Natural killer cell (primary cell): ENCODE measurements at regions of chr19 and their contacts with region 1.

Region 1: DNA sequence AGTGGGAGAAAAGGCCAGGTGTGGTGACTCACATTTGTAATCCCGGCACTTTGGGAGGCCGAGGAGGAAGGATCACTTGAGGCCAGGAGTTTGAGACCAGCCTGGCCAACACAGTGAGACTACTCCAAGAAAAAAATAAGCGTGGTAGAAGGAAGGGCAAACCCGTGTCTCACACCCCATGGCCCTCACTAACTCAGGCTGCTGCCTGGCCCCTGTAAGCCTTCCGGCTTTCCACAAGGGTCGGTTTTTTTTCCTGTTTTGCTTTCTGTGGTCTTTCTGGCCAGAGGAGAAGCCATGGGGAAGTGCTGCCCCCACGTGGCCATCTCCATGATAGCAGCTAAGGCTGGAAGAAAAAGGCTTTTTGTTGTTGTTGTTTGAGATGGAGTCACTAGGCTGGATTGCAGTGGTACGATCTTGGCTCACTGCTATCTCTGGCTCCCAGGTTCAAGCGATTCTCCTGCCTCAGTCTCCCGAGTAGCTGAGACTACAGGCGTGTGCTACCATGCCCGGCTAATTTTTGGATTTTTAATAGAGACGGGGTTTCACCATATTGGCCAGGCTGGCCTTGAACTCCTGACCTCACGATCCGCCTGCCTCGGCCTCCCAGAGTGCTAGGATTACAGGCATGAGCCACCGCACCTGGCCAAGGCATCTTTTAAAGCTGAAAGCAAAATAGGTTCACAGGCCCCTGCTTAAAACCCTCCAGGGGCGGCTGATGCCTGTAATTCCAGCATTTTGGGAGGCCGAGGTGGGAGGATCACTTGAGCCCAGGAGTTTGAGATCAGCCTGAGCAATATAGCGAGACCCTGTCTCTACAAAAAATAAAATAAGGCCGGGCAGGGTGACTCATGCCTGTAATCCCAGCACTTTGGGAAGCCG is 7.5 kb upstream of the ARHGEF18 start:
- DNase-seq: peak; percentile 86 to 90
- ATAC-seq: peak; percentile 59 to 66 (median 65)
- H3K4me3 ChIP-seq: no peak overlapping the region
- H3K4me3 Mint-ChIP-seq: peak overlapping the region; percentile 45
- H3K27ac ChIP-seq: no peak overlapping the region
- H3K27ac Mint-ChIP-seq: peak overlapping the region; percentile 23 to 76
- H3K4me1 ChIP-seq: peaks cover 68% of the 10 kb centered on the region
- H3K4me1 Mint-ChIP-seq: peaks cover 41 to 49% of the 10 kb centered on the region in 2 donors
- H3K27me3 ChIP-seq: no peaks in the 10 kb centered on the region
- H3K27me3 Mint-ChIP-seq: no peaks in the 10 kb centered on the region
- CTCF ChIP-seq: peak; percentile 86

Region 2: DNA sequence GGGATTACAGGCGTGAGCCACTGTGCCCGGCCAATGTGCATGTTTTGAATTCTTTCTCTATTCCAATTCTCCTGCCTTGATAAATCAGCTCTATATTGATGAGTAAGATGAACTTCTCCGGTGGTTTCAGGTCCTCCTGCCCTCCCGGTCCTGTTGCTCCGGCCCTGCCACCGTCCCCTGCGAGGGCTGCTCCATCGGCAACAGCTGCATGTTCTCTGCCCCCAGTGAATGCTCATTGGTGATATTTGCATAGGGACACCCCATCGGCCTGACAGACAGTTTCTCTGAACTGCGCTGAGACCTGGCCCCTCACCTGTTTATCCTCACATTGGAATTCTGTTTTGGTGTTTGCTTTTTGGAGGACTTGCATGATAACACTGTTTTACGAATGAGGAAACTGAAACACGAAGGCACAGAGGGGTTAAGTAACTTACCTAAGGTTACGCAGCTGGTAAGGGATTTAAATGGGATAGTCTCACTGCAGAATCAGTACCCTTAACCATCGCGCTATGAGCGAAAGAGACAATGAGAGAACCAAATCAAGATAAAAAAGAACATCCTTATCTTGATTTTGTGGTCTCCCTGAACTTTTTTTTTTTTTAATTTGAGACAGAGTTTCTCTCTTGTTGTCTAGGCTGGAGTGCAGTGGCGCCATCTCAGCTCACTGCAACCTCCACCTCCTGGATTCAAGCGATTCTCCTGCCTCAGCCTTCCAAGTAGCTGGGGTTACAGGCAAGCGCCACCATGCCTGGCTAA is 239.5 kb before region 1 on chr19:
- intact Hi-C with region 1: loop called (anchors 1 kb)
- DNase-seq: peak in 1 of 2 donors; percentile 48
- ATAC-seq: no peak
- H3K4me3 ChIP-seq: no peak overlapping the region
- H3K4me3 Mint-ChIP-seq: peak overlapping the region; percentile 49
- H3K27ac ChIP-seq: no peak overlapping the region
- H3K27ac Mint-ChIP-seq: no peak overlapping the region
- H3K4me1 ChIP-seq: peaks cover 10% of the 10 kb centered on the region
- H3K4me1 Mint-ChIP-seq: peaks cover 10 to 20% of the 10 kb centered on the region in 2 donors
- H3K27me3 ChIP-seq: no peaks in the 10 kb centered on the region
- H3K27me3 Mint-ChIP-seq: no peaks in the 10 kb centered on the region
- CTCF ChIP-seq: no peak

Region 3: GRCh38 chr19:7149956-7150705 is 191.1 kb before region 1 on chr19:
- intact Hi-C with region 1: loop called (anchors 1 kb)
- DNase-seq: no peak
- ATAC-seq: no peak
- H3K4me3 ChIP-seq: no peak overlapping the region
- H3K4me3 Mint-ChIP-seq: no peak overlapping the region
- H3K27ac ChIP-seq: no peak overlapping the region
- H3K27ac Mint-ChIP-seq: no peak overlapping the region
- H3K4me1 ChIP-seq: no peaks in the 10 kb centered on the region
- H3K4me1 Mint-ChIP-seq: peaks cover 6 to 10% of the 10 kb centered on the region in 2 donors
- H3K27me3 ChIP-seq: no peaks in the 10 kb centered on the region
- H3K27me3 Mint-ChIP-seq: no peaks in the 10 kb centered on the region
- CTCF ChIP-seq: no peak

Region 4: DNA sequence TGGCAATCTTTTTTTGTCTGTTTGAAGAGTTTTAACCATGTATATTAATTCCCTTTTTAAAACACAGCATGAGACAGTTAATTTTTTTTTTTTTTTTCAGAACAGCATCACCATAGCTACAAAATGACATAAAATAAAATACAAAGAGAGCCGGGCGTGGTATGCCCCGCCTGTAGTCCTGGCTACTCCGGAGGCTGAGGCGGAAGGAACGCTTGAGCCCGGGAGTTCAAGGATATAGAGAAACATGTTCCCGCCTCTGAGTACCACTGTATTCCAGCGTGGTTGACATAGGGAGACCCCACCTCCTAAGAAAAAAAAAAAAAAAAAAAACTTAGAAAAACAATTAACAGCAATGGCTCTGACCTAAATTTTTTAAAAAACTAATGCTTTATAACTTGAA is 37.0 kb before region 1 on chr19:
- intact Hi-C with region 1: no loop called
- DNase-seq: no peak
- ATAC-seq: no peak
- H3K4me3 ChIP-seq: no peak overlapping the region
- H3K4me3 Mint-ChIP-seq: no peak overlapping the region
- H3K27ac ChIP-seq: no peak overlapping the region
- H3K27ac Mint-ChIP-seq: no peak overlapping the region
- H3K4me1 ChIP-seq: no peaks in the 10 kb centered on the region
- H3K4me1 Mint-ChIP-seq: no peaks in the 10 kb centered on the region
- H3K27me3 ChIP-seq: no peaks in the 10 kb centered on the region
- H3K27me3 Mint-ChIP-seq: peaks cover 0 to 3% of the 10 kb centered on the region in 2 donors
- CTCF ChIP-seq: no peak

Region 5: GRCh38 chr19:7355151-7355820 is 14.1 kb after region 1 on chr19:
- intact Hi-C with region 1: no loop called
- DNase-seq: no peak
- ATAC-seq: no peak
- H3K4me3 ChIP-seq: no peak overlapping the region
- H3K4me3 Mint-ChIP-seq: no peak overlapping the region
- H3K27ac ChIP-seq: no peak overlapping the region
- H3K27ac Mint-ChIP-seq: peak overlapping the region in 1 of 2 donors; percentile 76
- H3K4me1 ChIP-seq: peaks cover 32% of the 10 kb centered on the region
- H3K4me1 Mint-ChIP-seq: peaks cover 51 to 69% of the 10 kb centered on the region in 2 donors
- H3K27me3 ChIP-seq: no peaks in the 10 kb centered on the region
- H3K27me3 Mint-ChIP-seq: no peaks in the 10 kb centered on the region
- CTCF ChIP-seq: no peak